ENCODE measurements at regions of chr1 and their contacts with region 1.

Region 1: DNA sequence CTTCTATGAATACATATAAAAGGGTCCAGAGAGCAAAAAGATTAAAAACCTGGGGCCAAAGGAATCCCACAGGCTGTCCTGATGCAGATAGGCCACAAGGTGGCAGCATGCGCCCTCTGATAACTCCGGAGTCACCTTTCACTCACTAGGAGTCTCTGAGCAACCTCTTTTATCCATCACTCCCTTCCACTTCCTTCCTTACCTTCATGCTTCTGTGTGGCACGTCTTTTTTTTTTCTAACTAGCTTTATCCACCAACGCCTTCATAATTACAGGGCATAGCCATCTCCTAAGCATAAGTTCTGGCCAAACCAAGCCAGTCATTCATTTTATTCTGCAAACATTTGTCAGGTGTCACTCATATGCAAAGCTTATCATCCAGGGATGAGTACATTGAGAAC is 3.9 kb upstream of the PGLYRP4 start:
- DNase-seq: peak; percentile 82
- ATAC-seq: peak; percentile 80
- H3K4me3 Mint-ChIP-seq: no peak overlapping the region
- H3K27ac Mint-ChIP-seq: no peak overlapping the region
- H3K4me1 Mint-ChIP-seq: peaks cover 5% of the 10 kb centered on the region
- H3K27me3 Mint-ChIP-seq: peaks cover 9% of the 10 kb centered on the region

Region 2: DNA sequence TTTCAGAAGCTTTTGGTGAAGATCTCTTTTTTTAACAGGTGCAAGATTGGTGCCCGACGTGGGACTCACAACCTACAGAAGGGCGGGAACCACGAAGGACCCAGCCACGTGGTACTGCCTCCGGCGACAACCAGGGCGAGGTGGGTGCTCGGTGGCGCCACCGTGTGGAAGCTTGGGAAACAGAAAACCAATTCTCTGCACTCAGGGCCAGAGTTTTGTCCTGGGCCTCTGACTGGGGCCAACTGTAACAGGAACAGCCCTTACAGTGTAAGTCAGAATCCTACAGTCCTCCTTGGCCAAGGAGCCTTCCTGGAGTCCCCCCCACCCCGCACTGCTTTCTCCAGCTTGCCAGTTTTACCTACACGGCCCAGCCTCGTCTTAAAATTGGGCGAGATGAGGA is 52.2 kb after region 1 on chr1:
- CTCF ChIA-PET with region 1: interaction called, 14 read pairs
- POLR2A ChIA-PET with region 1: no interaction called
- intact Hi-C with region 1: loop called (anchors 1 kb)
- DNase-seq: peak; percentile 84
- ATAC-seq: peak; percentile 81
- H3K4me3 Mint-ChIP-seq: no peak overlapping the region
- H3K27ac Mint-ChIP-seq: no peak overlapping the region
- H3K4me1 Mint-ChIP-seq: peaks cover 12% of the 10 kb centered on the region
- H3K27me3 Mint-ChIP-seq: peaks cover 9% of the 10 kb centered on the region

Region 3: DNA sequence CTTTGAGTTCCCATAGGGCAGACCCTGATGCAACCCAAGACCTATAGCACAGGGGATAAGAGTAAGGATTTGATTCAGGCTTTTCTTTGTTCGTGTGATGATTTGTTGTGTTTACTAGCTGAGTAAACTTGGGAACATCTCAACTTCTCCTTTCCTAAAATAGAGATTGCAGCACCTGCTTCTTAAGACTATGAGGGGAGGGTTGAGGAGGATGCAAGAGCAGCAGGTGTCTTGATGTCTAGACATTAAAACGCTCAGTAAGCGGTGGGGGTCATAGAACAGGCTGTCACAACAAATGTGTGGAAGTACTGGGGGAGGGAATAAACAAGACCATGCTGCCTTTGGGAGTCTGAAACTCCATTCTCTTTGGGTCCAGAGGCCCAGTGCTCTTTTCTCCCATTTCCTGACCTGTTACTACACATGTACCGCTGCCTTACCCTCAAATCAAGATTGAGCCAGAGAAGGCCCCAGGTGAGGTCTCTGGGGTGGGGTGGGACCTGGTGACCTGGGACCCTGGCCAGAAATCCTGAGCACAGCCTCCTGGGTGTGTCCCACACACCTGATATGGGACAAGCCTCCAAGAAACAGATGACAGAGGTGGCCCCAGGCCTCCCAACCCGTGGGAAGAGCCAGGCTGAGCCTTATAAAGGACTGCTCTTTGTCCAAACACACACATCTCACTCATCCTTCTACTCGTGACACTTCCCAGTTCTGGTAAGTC is 63.5 kb after region 1 on chr1 and contains the start of gene S100A7A:
- CTCF ChIA-PET with region 1: no interaction called
- POLR2A ChIA-PET with region 1: no interaction called
- intact Hi-C with region 1: no loop called
- DNase-seq: no peak
- ATAC-seq: no peak
- H3K4me3 Mint-ChIP-seq: no peak within 1 kb of the TSS
- H3K27ac Mint-ChIP-seq: no peak within 1 kb of the TSS
- H3K4me1 Mint-ChIP-seq: no peaks in the 10 kb centered on the region
- H3K27me3 Mint-ChIP-seq: peaks cover 20% of the 10 kb centered on the region
- total RNA-seq, gene S100A7A: not detected

Region 4: GRCh38 chr1:153465811-153466636 is 113.5 kb after region 1 on chr1:
- CTCF ChIA-PET with region 1: interaction called, 4 read pairs
- POLR2A ChIA-PET with region 1: no interaction called
- intact Hi-C with region 1: loop called (anchors 1 to 10 kb)
- DNase-seq: peak; percentile 83
- ATAC-seq: peak; percentile 81
- H3K4me3 Mint-ChIP-seq: no peak overlapping the region
- H3K27ac Mint-ChIP-seq: no peak overlapping the region
- H3K4me1 Mint-ChIP-seq: peaks cover 4% of the 10 kb centered on the region
- H3K27me3 Mint-ChIP-seq: peaks cover 20% of the 10 kb centered on the region

Region 5: GRCh38 chr1:153488731-153489130 is 136.2 kb after region 1 on chr1:
- CTCF ChIA-PET with region 1: interaction called, 160 read pairs
- POLR2A ChIA-PET with region 1: no interaction called
- intact Hi-C with region 1: no loop called
- DNase-seq: no peak
- ATAC-seq: no peak
- H3K4me3 Mint-ChIP-seq: no peak overlapping the region
- H3K27ac Mint-ChIP-seq: no peak overlapping the region
- H3K4me1 Mint-ChIP-seq: no peaks in the 10 kb centered on the region
- H3K27me3 Mint-ChIP-seq: peaks cover 13% of the 10 kb centered on the region

Region 6: GRCh38 chr1:153494976-153495535 is 142.5 kb after region 1 on chr1:
- CTCF ChIA-PET with region 1: interaction called, 160 read pairs
- POLR2A ChIA-PET with region 1: no interaction called
- intact Hi-C with region 1: loop called (anchors 1 kb)
- DNase-seq: peak; percentile 90
- ATAC-seq: peak; percentile 90
- H3K4me3 Mint-ChIP-seq: no peak overlapping the region
- H3K27ac Mint-ChIP-seq: no peak overlapping the region
- H3K4me1 Mint-ChIP-seq: no peaks in the 10 kb centered on the region
- H3K27me3 Mint-ChIP-seq: peaks cover 14% of the 10 kb centered on the region

Region 7: GRCh38 chr1:153608742-153609584 is 256.4 kb after region 1 on chr1:
- CTCF ChIA-PET with region 1: interaction called, 3 read pairs
- POLR2A ChIA-PET with region 1: no interaction called
- intact Hi-C with region 1: loop called in 1 of 2 experiments (anchors 10 kb)
- DNase-seq: no peak
- ATAC-seq: no peak
- H3K4me3 Mint-ChIP-seq: no peak overlapping the region
- H3K27ac Mint-ChIP-seq: no peak overlapping the region
- H3K4me1 Mint-ChIP-seq: no peaks in the 10 kb centered on the region
- H3K27me3 Mint-ChIP-seq: no peaks in the 10 kb centered on the region

Measured in activated CD4-positive, alpha-beta T cell treated with anti-CD3 and anti-CD28 coated beads for 36 hours (primary cell).